Lower leg skin (tissue), 4 donors: ENCODE measurements at regions of chr4 and their contacts with region 1.

Region 1: GRCh38 chr4:137070614-137071013 is 461.7 kb downstream of the PCDH18 start:
- DNase-seq: no peak
- H3K4me3 ChIP-seq: no peak overlapping the region
- CTCF ChIP-seq: no peak
- POLR2A ChIP-seq: no peak

Region 2: DNA sequence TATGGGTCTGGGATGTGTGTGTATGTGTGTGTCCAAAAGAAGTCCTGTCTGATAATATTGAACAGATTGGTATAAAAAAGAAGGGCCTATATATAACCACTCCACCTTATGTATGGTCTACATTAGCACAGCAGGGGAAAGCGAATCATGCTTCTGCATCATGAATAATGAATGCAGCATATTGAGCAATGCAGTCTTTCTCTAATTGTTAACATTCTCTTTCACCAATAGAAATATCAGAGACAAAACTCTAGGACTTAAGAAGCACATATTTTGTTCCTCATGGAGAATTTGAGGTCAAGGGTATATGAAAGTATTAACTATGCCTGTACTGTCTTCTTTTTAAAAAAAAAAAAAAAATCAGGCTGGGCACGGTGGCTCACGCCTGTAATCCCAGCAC is 1680.7 kb after region 1 on chr4:
- intact Hi-C with region 1: loop called (anchors 5 kb)
- DNase-seq: no peak
- H3K4me3 ChIP-seq: no peak overlapping the region
- CTCF ChIP-seq: no peak
- POLR2A ChIP-seq: no peak